ENCODE measurements at regions of chr4 and their contacts with region 1.

Region 1: DNA sequence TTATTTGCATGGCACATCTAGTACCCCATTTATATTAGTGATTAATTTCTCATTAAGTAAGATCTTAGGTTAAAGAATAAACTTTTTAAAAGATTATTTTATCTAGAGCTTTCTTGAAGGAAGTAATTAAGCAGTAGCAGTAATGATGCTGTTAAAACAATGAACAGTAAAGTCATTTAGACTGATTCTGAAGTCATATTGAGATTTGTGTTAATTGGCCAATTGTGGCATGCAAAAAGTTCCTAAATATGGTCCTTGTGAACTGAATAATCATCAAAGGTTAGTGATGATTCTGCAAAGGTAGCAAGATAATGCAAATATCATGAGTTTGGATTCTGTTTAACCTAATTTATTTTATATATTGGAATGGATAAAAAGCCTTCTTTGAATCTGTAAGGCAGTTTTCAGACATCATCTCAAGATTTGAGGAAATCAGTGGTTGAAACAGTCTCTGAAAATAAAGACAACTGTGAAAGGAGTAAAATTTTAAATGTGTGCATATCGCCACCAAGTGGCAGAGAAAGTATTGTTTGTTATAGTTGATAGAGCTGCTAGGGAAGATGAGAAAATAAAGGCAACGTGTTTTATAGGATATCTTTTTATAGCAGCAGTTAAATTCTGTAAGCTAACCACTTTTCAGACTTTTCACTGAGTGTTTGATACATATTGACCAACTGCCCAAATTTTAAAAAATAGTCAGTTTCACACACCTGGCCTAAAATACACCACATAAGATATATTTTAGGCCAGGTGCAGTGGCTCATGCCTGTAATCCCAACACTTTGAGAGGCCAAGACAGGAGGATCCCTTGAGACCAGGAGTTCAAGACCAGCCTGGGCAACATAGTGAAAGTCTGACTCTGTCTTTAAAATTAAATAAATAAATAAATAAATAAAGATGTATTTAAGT is 79.6 kb downstream of the CCKAR start:
- DNase-seq: no peak
- H3K4me3 ChIP-seq: no peak overlapping the region
- H3K27ac ChIP-seq: no peak overlapping the region
- H3K4me1 ChIP-seq: peaks cover 3 to 10% of the 10 kb centered on the region in 2 donors
- H3K27me3 ChIP-seq: no peaks in the 10 kb centered on the region
- CTCF ChIP-seq: peak; percentile 52 to 65 (median 64)

Region 2: DNA sequence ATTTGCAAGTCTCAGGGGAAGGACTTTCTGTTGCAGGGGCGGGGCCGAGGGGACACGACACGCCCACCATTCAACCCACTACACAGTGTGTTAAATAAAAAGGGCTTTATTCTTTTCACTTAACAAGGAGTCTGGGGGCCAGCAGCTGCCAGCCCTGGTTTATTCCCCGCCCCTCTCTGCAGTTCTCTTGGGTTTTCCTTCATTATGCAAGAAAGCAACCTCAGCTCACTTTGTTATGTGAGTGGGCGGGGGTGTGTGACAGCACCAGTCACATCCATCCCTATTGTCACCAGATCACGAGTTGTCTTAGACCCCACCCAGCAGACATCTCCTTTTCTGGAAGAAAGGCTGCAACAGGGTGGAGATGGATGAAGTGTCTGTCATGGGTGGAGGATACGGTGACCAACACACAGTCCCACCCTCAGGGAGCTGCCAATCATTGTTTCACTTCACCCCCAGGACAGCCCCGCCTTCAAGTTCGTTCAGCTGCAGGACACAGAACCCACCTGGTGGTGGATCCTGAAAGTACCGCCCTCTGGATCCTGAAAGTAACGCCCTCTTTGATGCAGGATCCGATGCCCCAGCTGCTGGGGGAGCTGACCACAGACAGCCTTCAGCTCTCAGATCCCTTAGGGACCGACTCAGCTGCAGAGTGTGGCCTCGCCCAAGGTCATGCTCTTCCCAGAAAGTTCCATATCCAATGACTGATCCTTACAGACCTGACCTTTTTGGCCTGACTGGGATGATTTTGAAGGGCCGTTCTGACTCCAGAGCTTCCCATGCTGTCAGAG is 417.0 kb before region 1 on chr4:
- intact Hi-C with region 1: loop called (anchors 1 kb)
- DNase-seq: peak in 1 of 2 donors; percentile 62
- H3K4me3 ChIP-seq: no peak overlapping the region
- H3K27ac ChIP-seq: no peak overlapping the region
- H3K4me1 ChIP-seq: peaks cover 0 to 3% of the 10 kb centered on the region in 2 donors
- H3K27me3 ChIP-seq: no peaks in the 10 kb centered on the region
- CTCF ChIP-seq: no peak

Region 3: DNA sequence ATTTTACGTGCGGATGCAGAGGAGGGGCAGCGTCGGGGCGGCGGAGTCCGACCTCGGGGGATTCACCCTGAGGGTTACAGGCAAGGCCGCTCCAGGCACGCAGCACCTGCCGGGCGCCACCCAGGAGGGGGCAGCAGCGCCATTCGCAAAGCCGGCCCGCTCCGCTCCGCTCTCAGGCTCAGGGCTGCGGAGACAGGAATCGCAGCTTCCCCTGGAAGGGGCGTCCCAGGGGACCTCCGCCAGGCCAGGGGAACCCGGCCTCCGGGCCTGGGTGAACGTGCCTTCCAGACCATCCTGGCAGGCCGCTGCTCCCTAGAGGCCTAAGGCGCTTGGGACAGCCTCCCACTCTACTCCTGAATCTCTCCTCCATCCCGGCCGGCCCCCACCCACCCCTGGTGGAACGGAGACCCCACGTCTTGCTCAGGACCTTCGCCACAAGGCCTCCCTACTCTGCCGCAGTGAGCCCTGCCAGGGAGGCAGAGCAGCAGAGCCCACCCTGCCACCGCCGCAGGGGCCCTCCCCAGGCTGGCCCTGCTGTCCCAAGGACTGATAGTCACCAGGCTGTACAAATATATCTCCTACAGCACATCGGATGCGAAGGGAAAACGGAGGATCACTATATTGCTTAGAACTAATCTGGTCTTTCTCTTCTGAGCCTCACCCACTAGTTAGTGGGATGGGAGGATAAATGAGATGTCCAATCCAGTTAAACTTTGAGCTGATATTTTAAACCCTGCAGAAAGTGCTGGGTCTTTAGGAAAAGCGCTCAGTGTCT is 381.7 kb before region 1 on chr4:
- intact Hi-C with region 1: loop called (anchors 1 kb)
- DNase-seq: peak in 1 of 2 donors; percentile 85
- H3K4me3 ChIP-seq: peak overlapping the region in 1 of 2 donors; percentile 51
- H3K27ac ChIP-seq: no peak overlapping the region
- H3K4me1 ChIP-seq: peaks cover 0 to 25% of the 10 kb centered on the region in 2 donors
- H3K27me3 ChIP-seq: no peaks in the 10 kb centered on the region
- CTCF ChIP-seq: peak; percentile 80 to 92 (median 85)

Region 4: GRCh38 chr4:26081795-26082498 is 328.7 kb before region 1 on chr4:
- intact Hi-C with region 1: loop called (anchors 1 kb)
- DNase-seq: no peak
- H3K4me3 ChIP-seq: no peak overlapping the region
- H3K27ac ChIP-seq: no peak overlapping the region
- H3K4me1 ChIP-seq: no peaks in the 10 kb centered on the region
- H3K27me3 ChIP-seq: no peaks in the 10 kb centered on the region
- CTCF ChIP-seq: peak; percentile 26 to 64 (median 55)

Region 5: GRCh38 chr4:26235500-26235899 is 175.1 kb before region 1 on chr4:
- intact Hi-C with region 1: loop called (anchors 10 kb)
- DNase-seq: peak in 1 of 2 donors; percentile 87
- H3K4me3 ChIP-seq: no peak overlapping the region
- H3K27ac ChIP-seq: peak overlapping the region; percentile 34 to 58
- H3K4me1 ChIP-seq: peaks cover 0 to 19% of the 10 kb centered on the region in 2 donors
- H3K27me3 ChIP-seq: no peaks in the 10 kb centered on the region
- CTCF ChIP-seq: peak in 1 of 3 experiments; percentile 22

Region 6: DNA sequence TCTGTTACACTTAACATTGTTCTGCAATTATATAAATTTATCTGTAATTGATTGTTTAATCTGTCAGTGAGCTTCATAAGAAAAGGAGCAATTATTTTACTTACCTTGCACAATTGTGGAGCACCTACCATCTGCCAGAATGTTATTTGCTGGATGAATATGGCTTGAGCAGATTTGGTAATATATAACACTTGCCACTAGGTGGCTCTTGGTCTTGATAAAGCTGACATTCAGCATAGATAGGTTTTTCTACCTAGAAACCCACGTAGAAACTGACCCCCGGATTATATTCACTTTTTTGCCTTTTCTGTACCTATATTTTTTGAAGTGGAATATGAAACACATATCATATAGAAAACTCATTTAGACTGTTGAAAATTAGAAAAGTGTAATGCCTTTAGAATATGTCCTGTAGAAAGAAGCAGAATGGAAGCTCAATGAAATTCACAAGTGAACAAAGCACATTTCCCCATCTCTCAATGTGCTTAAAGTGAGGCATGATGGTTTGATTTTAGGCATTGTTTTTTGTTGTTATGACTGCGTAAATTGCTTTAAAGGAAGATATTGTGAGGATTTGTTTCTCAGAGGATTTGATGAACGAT is 80.4 kb before region 1 on chr4:
- intact Hi-C with region 1: loop called (anchors 2 kb)
- DNase-seq: no peak
- H3K4me3 ChIP-seq: no peak overlapping the region
- H3K27ac ChIP-seq: no peak overlapping the region
- H3K4me1 ChIP-seq: peaks cover 0 to 2% of the 10 kb centered on the region in 2 donors
- H3K27me3 ChIP-seq: no peaks in the 10 kb centered on the region
- CTCF ChIP-seq: peak; percentile 44 to 70 (median 53)

Region 7: DNA sequence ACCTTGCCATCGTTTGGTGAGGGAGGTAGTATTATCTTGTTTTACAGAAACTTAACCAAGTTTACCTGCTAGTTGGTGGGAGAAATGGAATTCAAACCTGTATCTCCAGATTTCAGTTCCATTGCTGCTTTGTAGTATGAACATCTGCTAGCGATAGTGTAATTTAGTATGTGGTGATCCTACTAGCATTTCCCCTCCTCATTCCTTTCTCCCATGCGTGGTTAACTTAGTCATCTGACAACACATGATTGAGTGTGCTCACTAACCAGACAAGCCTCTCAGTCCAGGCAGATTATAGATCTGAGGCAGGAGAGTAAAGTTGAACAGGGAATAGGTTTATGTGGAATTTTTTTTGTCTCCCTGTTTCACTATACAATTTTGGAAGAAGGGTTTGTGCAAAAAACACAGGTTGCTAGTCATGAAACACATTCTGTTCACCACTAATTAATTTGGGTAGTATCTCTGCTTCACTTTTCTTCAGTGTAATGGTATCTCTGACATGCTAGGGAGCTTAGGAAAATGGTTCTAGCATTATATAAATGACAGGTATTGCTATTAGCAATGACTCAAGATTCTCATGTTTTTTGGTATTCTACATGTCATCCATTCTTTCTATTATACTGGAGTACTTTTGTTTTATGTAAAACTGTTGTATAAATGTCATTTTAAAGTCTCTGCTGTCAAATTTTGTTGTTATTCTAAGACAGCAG is 68.2 kb before region 1 on chr4:
- intact Hi-C with region 1: no loop called
- DNase-seq: no peak
- H3K4me3 ChIP-seq: no peak overlapping the region
- H3K27ac ChIP-seq: no peak overlapping the region
- H3K4me1 ChIP-seq: peaks cover 0 to 35% of the 10 kb centered on the region in 2 donors
- H3K27me3 ChIP-seq: no peaks in the 10 kb centered on the region
- CTCF ChIP-seq: no peak

Region 8: GRCh38 chr4:26860157-26860921 is 449.7 kb after region 1 on chr4 and contains the start of gene STIM2:
- intact Hi-C with region 1: loop called (anchors 10 kb)
- DNase-seq: peak; percentile 88 to 98
- H3K4me3 ChIP-seq: peak within 1 kb of the TSS; percentile 95 to 100
- H3K27ac ChIP-seq: peak within 1 kb of the TSS; percentile 92 to 98
- H3K4me1 ChIP-seq: peaks cover 7 to 20% of the 10 kb centered on the region in 2 donors
- H3K27me3 ChIP-seq: no peaks in the 10 kb centered on the region
- CTCF ChIP-seq: peak in 2 of 3 experiments; percentile 27 to 35
- total RNA-seq, gene STIM2: 17.2 TPM